GM10248 (cell line): ENCODE measurements at regions of chr3 and their contacts with region 1.

Region 1: DNA sequence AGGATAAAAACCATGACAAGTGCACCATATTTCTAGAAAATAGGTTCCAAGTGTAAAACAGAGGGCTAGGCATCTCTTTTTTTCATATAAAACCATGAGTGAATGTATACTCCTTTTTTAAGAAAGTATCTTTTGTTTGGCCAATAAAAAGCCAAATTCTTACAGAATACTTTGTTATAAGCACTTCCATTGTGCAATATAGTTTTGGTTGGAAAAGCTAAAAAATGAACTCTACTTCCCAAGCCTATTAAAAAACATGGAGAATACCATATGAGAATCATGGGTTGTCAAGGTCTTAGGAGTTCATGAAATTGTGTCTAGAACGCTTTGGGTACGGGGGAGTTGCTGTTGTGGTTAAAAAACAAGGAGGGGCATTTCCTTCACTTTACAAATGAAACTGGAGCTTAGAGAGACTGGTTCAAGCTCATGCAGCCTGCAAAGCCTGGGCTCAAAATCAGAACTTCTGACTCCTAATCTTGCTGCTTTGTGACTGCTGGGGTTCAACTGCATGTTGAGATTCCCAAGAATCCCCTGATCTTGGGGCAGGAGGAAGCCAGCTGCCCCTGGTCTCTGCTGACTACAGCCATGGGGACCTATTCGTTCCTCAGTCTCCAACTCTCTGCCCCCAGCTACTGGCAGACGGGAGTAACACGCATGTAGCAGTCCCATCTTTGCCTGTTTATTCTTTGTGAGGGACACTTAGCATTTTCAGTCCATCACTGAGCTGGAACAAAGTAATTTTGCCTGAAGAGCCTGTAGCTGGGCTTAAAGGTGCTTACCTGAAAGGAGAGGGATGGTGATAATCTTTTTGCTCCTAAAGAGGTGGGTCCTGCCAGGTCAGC is 229.1 kb downstream of the CHST2 start:
- DNase-seq: peak; percentile 13
- CTCF ChIP-seq: peak; percentile 41

Region 2: GRCh38 chr3:143337387-143337786 is 11.3 kb before region 1 on chr3:
- CTCF ChIA-PET with region 1: interaction called, 33 read pairs
- POLR2A ChIA-PET with region 1: no interaction called
- DNase-seq: no peak
- CTCF ChIP-seq: no peak

Region 3: DNA sequence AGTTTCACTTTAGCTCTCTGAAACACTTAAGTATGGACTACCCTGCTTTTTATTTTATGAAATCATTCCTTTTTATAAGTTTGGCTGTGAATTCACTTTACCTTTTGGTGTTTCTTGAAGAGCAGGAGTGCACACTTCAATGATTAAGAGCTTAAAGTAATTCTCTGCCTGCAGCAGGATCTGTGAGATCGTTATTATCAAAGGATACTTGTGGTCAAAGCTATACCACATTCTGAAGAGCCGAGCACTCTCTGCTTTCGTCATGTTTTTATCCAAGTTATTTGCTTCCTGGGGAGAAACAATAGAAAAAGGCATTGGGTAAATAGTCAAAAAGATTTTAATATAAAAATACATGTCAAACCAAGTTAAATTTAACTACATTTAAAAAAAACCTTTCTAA is 14.6 kb after region 1 on chr3:
- CTCF ChIA-PET with region 1: interaction called, 12 read pairs
- POLR2A ChIA-PET with region 1: no interaction called
- DNase-seq: no peak
- CTCF ChIP-seq: no peak